MCF 10A (cell line): ENCODE measurements at regions of chr10 and their contacts with region 1.

Region 1: DNA sequence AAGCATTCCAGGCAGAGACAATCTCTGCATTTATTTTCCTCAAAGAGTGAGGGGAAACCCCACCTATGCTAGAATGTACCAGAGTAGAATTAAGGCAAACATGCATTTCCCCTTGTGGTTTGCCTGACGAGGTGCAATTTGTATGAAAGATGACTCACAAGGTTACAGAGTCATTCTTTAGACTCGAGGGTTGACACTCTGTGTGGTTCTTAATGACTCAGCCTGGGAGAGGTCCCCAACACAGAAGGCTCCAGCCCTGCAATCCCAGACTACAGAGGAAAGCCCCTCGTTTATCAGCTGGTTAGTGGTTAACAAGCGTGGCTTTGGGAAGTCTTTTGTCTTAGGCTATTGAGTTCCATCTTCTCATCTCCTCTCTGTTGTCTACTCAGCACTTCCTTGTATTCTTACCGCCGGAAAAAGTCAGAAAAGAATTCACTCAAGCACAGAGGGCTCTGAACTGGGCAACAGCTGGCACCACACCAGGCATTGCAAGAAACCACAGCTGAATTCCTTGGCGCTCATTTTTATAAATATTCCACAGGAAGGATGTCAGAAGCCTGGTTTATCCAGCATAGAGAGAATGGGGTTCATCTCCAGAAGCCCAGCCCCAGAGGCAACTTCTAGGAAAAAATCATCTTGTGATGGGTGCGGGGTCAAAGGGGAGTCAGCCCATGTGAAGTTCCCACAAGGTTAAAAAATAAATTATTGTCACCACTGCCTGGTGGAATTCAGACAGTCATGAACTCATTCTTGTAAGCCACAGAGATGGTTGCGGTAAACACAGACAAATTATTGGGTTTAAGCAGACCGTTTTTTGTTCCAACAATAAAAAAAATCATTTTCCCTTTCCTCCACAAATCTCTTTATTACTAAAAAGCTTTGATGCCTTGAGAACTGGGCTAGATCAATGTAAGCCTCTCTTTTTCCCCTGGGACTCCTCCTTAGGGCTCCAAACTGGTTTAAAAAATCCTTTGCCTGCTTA is 24.5 kb upstream of the SVIL start:
- DNase-seq: peak; percentile 98
- H3K4me3 Mint-ChIP-seq: peak overlapping the region; percentile 15
- H3K27ac Mint-ChIP-seq: peak overlapping the region; percentile 74
- H3K4me1 Mint-ChIP-seq: peaks cover 24% of the 10 kb centered on the region
- H3K27me3 Mint-ChIP-seq: no peaks in the 10 kb centered on the region
- CTCF ChIP-seq: peak; percentile 32

Region 2: DNA sequence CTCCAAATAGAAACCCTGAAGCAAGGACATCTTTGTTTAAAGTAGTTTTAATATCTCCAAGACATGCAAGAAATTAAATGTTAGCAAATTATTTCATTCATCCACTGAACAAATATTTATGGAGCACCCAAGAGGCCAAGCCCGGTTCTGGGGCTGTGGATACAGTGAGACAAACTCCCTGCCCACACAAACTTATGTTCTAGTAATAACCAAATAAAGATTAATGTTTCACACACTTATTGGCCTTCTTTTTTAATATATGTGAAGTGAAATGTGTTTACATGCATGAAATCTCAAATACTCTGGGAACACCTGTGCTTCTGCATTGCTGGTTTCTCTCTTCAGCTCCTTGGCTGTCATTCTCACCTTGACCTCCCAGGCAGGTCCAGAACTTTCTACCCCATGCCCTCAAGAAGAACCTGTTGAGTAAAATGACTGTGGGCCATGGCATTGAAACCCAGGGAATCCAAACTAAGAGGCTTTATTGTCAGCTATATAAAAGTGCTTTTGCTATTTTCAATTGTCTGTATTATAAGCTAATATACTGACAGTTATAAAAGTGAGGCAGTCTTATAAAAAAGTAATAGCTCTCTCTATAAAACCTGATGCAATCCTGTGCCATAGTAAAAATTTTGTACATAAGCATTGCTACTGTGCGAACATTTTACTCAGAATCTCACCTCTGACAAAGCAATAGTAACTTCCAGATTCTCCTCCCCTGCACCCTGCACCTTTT is 68.2 kb before region 1 on chr10:
- CTCF ChIA-PET with region 1: interaction called, 3 read pairs
- POLR2A ChIA-PET with region 1: no interaction called
- intact Hi-C with region 1: loop called (anchors 1 kb)
- DNase-seq: no peak
- H3K4me3 Mint-ChIP-seq: peak overlapping the region; percentile 15
- H3K27ac Mint-ChIP-seq: peak overlapping the region; percentile 92
- H3K4me1 Mint-ChIP-seq: peaks cover 24% of the 10 kb centered on the region
- H3K27me3 Mint-ChIP-seq: no peaks in the 10 kb centered on the region
- CTCF ChIP-seq: no peak

Region 3: DNA sequence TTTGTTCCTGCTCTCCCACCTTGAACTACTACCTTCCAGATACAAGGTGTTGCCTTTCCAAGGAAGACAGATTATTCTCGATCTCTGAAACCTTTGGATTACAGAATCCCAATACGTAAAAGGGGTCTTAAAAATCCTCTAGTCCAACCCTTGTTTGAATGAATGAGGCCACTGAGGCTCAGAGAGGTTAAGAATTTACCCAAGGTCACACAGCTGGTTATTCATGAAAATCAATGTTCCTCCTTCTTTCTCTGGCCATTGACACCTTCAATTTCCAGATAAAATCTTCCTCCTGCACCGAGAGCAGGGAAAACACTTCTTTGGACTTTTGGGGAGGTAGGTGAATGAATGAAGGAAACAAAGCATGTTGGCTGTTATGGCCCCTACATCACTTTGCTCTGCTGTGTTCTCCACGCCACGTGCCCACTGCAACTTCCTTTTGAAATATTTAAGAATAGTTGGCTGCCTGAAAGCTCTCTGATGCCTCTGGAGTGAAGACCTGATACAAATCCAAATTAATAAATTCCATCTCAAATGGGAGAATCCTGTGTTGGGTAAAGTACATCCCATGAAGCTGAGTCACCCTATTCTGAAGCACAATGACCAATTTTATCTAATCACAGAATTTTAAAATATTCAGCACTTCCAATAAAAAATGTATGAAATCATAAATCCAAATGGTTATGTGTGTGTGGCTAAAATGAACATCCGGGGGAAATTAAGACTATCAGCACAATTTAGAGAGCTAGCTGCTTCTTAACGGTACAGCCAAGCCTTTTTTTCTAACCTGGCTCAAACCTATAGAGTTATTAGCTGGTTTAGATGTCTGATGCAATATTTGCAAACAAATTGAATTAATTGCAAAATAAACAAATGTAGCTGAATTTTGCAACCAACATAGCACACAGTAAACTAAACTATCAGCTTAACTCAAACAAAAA is 31.8 kb before region 1 on chr10:
- CTCF ChIA-PET with region 1: no interaction called
- POLR2A ChIA-PET with region 1: no interaction called
- intact Hi-C with region 1: loop called (anchors 1 kb)
- DNase-seq: peak; percentile 41
- H3K4me3 Mint-ChIP-seq: peak overlapping the region; percentile 53
- H3K27ac Mint-ChIP-seq: peak overlapping the region; percentile 68
- H3K4me1 Mint-ChIP-seq: peaks cover 36% of the 10 kb centered on the region
- H3K27me3 Mint-ChIP-seq: no peaks in the 10 kb centered on the region
- CTCF ChIP-seq: no peak

Region 4: GRCh38 chr10:29635711-29636144 is 23.5 kb before region 1 on chr10:
- CTCF ChIA-PET with region 1: interaction called, 4 read pairs
- POLR2A ChIA-PET with region 1: interaction called, 3 read pairs
- intact Hi-C with region 1: loop called (anchors 1 kb)
- DNase-seq: no peak
- H3K4me3 Mint-ChIP-seq: peak overlapping the region; percentile 78
- H3K27ac Mint-ChIP-seq: peak overlapping the region; percentile 96
- H3K4me1 Mint-ChIP-seq: peaks cover 45% of the 10 kb centered on the region
- H3K27me3 Mint-ChIP-seq: no peaks in the 10 kb centered on the region
- CTCF ChIP-seq: no peak

Region 5: GRCh38 chr10:29714096-29714874 is 55.0 kb after region 1 on chr10:
- CTCF ChIA-PET with region 1: interaction called, 3 read pairs
- POLR2A ChIA-PET with region 1: interaction called, 3 read pairs
- intact Hi-C with region 1: loop called (anchors 1 kb)
- DNase-seq: peak; percentile 87
- H3K4me3 Mint-ChIP-seq: no peak overlapping the region
- H3K27ac Mint-ChIP-seq: peak overlapping the region; percentile 57
- H3K4me1 Mint-ChIP-seq: peaks cover 29% of the 10 kb centered on the region
- H3K27me3 Mint-ChIP-seq: no peaks in the 10 kb centered on the region
- CTCF ChIP-seq: no peak

Region 6: GRCh38 chr10:29857843-29858701 is 198.8 kb after region 1 on chr10:
- CTCF ChIA-PET with region 1: no interaction called
- POLR2A ChIA-PET with region 1: no interaction called
- intact Hi-C with region 1: loop called (anchors 2 kb)
- DNase-seq: peak; percentile 83
- H3K4me3 Mint-ChIP-seq: no peak overlapping the region
- H3K27ac Mint-ChIP-seq: peak overlapping the region; percentile 3
- H3K4me1 Mint-ChIP-seq: peaks cover 38% of the 10 kb centered on the region
- H3K27me3 Mint-ChIP-seq: no peaks in the 10 kb centered on the region
- CTCF ChIP-seq: peak; percentile 68